Activated CD4-positive, alpha-beta T cell treated with anti-CD3 and anti-CD28 coated beads for 36 hours (primary cell): ENCODE measurements at regions of chr22 and their contacts with region 1.

Region 1: GRCh38 chr22:20093418-20094196 is 13.6 kb downstream of the DGCR8 start:
- DNase-seq: no peak
- ATAC-seq: no peak
- H3K4me3 Mint-ChIP-seq: no peak overlapping the region
- H3K27ac Mint-ChIP-seq: no peak overlapping the region
- H3K4me1 Mint-ChIP-seq: peaks cover 39% of the 10 kb centered on the region
- H3K27me3 Mint-ChIP-seq: no peaks in the 10 kb centered on the region

Region 2: GRCh38 chr22:19679522-19680101 is 414.0 kb before region 1 on chr22:
- CTCF ChIA-PET with region 1: no interaction called
- POLR2A ChIA-PET with region 1: no interaction called
- intact Hi-C with region 1: no loop called
- DNase-seq: peak; percentile 67
- ATAC-seq: peak; percentile 49
- H3K4me3 Mint-ChIP-seq: no peak overlapping the region
- H3K27ac Mint-ChIP-seq: no peak overlapping the region
- H3K4me1 Mint-ChIP-seq: peaks cover 6% of the 10 kb centered on the region
- H3K27me3 Mint-ChIP-seq: peaks cover 19% of the 10 kb centered on the region

Region 3: DNA sequence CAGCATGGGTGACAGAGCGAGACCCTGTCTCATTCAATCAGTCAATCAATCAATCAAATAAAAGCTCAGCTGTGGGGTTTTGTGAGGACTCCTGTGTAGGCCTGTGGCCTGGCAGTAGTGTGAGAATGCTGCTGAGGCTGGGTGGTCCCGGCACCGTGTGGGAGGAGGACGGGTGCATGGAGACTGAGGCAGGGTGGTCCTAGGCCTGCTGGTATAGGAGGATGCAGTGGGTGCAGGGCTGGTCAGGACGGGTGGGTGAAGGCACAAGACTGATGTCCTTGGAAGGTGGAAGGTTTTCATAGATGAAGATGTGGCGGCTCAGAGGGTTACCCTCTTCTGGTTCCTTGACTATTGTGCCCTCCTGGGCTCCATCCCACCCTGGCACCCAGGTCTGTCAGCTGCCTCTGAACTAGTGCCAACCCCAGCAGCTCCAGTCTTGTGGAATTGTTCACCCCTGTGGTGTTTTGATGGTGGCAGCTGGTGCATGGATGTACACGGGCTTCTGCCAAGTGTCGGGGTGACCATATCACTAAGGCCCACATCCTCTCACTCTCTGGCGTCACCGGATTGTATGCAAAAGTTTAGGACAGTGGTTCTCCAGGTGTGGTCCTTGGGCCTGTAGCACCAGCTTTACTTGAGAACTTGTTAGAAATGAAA is 49.0 kb before region 1 on chr22:
- CTCF ChIA-PET with region 1: no interaction called
- POLR2A ChIA-PET with region 1: no interaction called
- intact Hi-C with region 1: loop called in 1 of 2 experiments (anchors 5 kb)
- DNase-seq: no peak
- ATAC-seq: no peak
- H3K4me3 Mint-ChIP-seq: no peak overlapping the region
- H3K27ac Mint-ChIP-seq: no peak overlapping the region
- H3K4me1 Mint-ChIP-seq: peaks cover 10% of the 10 kb centered on the region
- H3K27me3 Mint-ChIP-seq: no peaks in the 10 kb centered on the region

Region 4: GRCh38 chr22:20111045-20111688 is 17.6 kb after region 1 on chr22:
- CTCF ChIA-PET with region 1: interaction called, 10 read pairs
- POLR2A ChIA-PET with region 1: interaction called, 4 read pairs
- intact Hi-C with region 1: no loop called
- DNase-seq: peak; percentile 66
- ATAC-seq: peak; percentile 79
- H3K4me3 Mint-ChIP-seq: no peak overlapping the region
- H3K27ac Mint-ChIP-seq: peak overlapping the region; percentile 93
- H3K4me1 Mint-ChIP-seq: peaks cover 29% of the 10 kb centered on the region
- H3K27me3 Mint-ChIP-seq: no peaks in the 10 kb centered on the region